Sciatic nerve (tissue), 2 donors: ENCODE measurements at regions of chr10 and their contacts with region 1.

Region 1: GRCh38 chr10:119207367-119207668 is at the start of gene GRK5:
- DNase-seq: peak; percentile 95
- ATAC-seq: peak; percentile 90
- total RNA-seq, gene GRK5: 54.1 TPM

Region 2: GRCh38 chr10:119416855-119417254 is 209.5 kb after region 1 on chr10:
- intact Hi-C with region 1: loop called (anchors 10 kb)
- DNase-seq: peak; percentile 83
- ATAC-seq: no peak

Region 3: GRCh38 chr10:119431034-119431767 is 223.9 kb after region 1 on chr10:
- intact Hi-C with region 1: no loop called
- DNase-seq: no peak
- ATAC-seq: no peak

Region 4: GRCh38 chr10:119441151-119441821 is 234.0 kb after region 1 on chr10:
- intact Hi-C with region 1: loop called (anchors 5 kb)
- DNase-seq: peak; percentile 74
- ATAC-seq: peak; percentile 79